ENCODE measurements at regions of chr17 and their contacts with region 1.

Region 1: DNA sequence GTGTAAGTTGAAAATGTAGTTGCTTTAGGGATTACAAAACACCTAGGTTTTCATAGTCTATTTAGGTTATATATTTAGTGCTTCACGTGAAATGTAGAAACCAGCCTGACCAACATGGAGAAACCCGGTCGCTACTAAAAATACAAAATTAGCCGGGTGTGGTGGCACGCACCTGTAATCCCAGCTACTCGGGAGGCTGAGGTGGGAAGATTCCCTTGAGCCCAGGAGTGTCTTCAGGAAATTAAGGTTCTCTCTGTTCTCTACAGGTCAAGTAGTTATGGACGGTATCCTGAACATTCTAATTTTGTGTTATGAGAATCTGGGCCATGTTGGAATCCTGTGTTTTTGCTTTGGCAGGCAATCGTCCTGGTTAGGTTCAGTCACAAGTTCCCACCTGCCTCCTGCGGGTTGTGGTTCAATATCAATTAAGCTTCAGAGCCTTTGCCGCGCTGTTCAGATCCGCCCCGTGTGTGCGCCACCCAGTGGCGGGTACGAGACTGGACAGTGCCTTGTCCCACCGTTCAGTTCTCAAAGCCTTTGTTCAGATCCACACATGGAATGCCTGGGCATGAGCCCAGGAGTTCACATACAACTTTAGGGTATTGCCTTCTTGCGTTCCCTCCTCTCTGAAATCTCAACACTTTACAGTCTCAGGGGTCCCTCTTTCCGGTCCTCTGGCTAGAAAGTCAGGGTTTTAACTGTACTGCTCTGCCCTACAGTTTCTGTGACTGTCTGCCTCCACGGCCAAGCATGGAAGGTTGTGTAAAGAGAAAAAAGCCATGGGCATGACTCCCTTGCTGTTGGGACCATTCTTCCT is 41.7 kb downstream of the HEATR6 start:
- DNase-seq: peak; percentile 64
- H3K4me3 Mint-ChIP-seq: no peak overlapping the region
- H3K27ac Mint-ChIP-seq: no peak overlapping the region
- H3K4me1 Mint-ChIP-seq: peaks cover 7% of the 10 kb centered on the region
- H3K27me3 Mint-ChIP-seq: peaks cover 21% of the 10 kb centered on the region

Region 2: GRCh38 chr17:59521204-59522126 is 515.5 kb before region 1 on chr17:
- intact Hi-C with region 1: loop called (anchors 5 kb)
- DNase-seq: peak; percentile 32
- H3K4me3 Mint-ChIP-seq: no peak overlapping the region
- H3K27ac Mint-ChIP-seq: no peak overlapping the region
- H3K4me1 Mint-ChIP-seq: peaks cover 6% of the 10 kb centered on the region
- H3K27me3 Mint-ChIP-seq: peaks cover 18% of the 10 kb centered on the region

Region 3: GRCh38 chr17:59914274-59914854 is 122.6 kb before region 1 on chr17:
- intact Hi-C with region 1: loop called (anchors 5 kb)
- DNase-seq: no peak
- H3K4me3 Mint-ChIP-seq: no peak overlapping the region
- H3K27ac Mint-ChIP-seq: no peak overlapping the region
- H3K4me1 Mint-ChIP-seq: no peaks in the 10 kb centered on the region
- H3K27me3 Mint-ChIP-seq: no peaks in the 10 kb centered on the region

Region 4: GRCh38 chr17:59964482-59965328 is 72.3 kb before region 1 on chr17 and contains the start of gene RNFT1:
- intact Hi-C with region 1: loop called (anchors 5 kb)
- DNase-seq: peak; percentile 85
- H3K4me3 Mint-ChIP-seq: peak within 1 kb of the TSS; percentile 91
- H3K27ac Mint-ChIP-seq: peak within 1 kb of the TSS; percentile 96
- H3K4me1 Mint-ChIP-seq: peaks cover 19% of the 10 kb centered on the region
- H3K27me3 Mint-ChIP-seq: no peaks in the 10 kb centered on the region
- total RNA-seq, gene RNFT1: 32.7 TPM in 2 replicates

Measured in activated T-helper 2 cell treated with anti-CD3 and anti-CD28 coated beads, Interferon-gamma antibody, Interleukin-2, Interleukin-4, amounts not matched to agents 10 μg/mL and 5 μg/mL and 100 μg/mL, durations not matched to agents 14 hours and 24 hours and 36 hours (primary cell).